Activated CD4-positive, alpha-beta T cell treated with anti-CD3 and anti-CD28 coated beads, Interleukin-2, amount 10 ng/mL, durations not matched to agents 24 days and 14 days (primary cell): ENCODE measurements at regions of chr15 and their contacts with region 1.

Region 1: GRCh38 chr15:64686216-64686631 is 89.2 kb downstream of the RBPMS2 start:
- DNase-seq: peak; percentile 81
- H3K4me3 Mint-ChIP-seq: no peak overlapping the region
- H3K27ac Mint-ChIP-seq: no peak overlapping the region
- H3K4me1 Mint-ChIP-seq: peaks cover 1% of the 10 kb centered on the region
- H3K27me3 Mint-ChIP-seq: no peaks in the 10 kb centered on the region

Region 2: DNA sequence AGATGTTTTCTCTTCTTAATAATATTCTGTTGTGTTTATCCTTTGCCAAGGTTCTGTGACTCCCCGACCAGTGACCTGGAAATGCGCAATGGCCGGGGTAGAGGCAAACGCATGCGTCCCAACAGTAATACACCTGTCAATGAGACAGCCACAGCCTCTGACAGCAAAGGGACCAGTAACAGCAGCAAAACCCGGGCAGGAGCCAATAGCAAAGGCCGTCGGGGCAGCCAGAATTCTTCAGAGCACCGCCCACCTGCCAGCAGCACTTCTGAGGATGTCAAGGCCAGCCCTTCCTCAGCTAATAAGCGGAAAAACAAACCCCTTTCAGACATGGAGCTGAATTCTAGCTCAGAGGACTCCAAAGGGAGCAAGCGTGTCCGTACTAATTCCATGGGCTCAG is 12.4 kb before region 1 on chr15:
- intact Hi-C with region 1: no loop called
- DNase-seq: no peak
- H3K4me3 Mint-ChIP-seq: no peak overlapping the region
- H3K27ac Mint-ChIP-seq: no peak overlapping the region
- H3K4me1 Mint-ChIP-seq: peaks cover 6% of the 10 kb centered on the region
- H3K27me3 Mint-ChIP-seq: no peaks in the 10 kb centered on the region

Region 3: DNA sequence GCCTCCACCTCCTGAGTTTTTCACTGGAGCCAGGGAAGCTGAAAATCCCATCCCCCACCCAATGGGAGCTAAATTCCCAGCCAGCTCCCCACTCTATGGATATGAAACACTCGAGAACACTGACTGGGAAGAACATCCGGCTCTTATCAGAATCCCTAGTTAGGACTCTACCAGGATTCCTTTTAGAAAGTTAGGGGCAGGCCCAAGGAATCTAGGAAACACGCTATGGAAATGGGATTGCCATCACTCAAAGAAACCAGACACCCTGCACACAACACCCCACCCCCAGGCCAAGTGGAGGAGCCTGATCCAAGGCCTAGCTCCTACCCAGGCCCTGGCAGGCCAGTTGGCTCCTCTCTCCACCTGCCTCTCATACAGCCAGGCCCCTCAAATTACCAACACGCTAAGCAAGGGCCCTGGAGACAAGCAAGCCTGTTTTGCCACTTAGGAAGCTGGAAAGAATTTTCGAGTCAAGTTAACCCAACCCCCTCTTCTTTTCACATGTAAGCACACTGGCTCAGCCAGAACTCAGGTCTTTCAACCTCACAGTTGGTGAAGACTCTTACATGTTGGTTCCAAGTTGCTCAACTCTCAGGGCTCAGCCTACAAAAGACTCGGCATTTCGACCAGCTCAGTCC is 13.6 kb after region 1 on chr15:
- intact Hi-C with region 1: loop called (anchors 2 kb)
- DNase-seq: no peak
- H3K4me3 Mint-ChIP-seq: no peak overlapping the region
- H3K27ac Mint-ChIP-seq: no peak overlapping the region
- H3K4me1 Mint-ChIP-seq: peaks cover 61% of the 10 kb centered on the region
- H3K27me3 Mint-ChIP-seq: no peaks in the 10 kb centered on the region

Region 4: DNA sequence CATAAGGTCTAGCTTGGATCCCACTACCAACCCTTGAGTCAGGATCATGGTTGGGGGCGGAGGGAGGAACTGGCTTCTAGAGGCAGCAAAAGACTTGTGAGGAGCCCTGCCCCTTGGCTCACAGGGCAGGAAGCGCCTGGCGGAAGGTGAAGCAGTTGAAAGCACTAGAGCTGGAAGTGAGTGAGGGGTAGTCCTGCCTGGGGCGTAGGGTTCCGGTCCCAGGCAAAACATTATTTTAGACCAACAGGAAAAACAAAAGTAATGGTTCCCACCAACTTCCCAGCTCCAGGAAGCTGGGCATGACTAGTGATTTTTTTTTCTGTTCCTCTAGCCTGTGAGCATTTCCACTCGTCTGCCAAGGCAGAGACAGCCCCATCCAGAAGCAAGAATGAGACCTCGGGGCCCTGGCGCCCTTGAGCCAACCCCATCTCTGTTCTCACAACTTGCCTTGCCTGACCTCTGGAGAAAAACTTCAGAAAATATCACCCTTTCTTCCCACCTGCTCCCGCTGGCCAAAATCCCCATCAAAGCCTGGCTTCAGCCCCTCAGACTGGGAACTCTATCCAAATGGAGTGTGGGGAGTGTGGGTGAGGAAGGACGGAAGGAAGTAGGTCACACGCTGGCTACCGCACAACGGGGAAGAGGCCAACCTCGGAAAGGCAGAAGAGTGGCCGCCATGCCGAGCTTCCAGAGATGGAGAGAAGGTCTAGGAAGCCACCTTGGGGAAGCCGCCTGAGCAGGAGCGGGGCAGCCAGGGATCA is 31.7 kb after region 1 on chr15:
- intact Hi-C with region 1: no loop called
- DNase-seq: no peak
- H3K4me3 Mint-ChIP-seq: no peak overlapping the region
- H3K27ac Mint-ChIP-seq: no peak overlapping the region
- H3K4me1 Mint-ChIP-seq: peaks cover 3% of the 10 kb centered on the region
- H3K27me3 Mint-ChIP-seq: no peaks in the 10 kb centered on the region